B cell (primary cell): ENCODE measurements at regions of chr1 and their contacts with region 1.

Region 1: GRCh38 chr1:207963427-207964194 is 52.7 kb upstream of the CD34 start:
- DNase-seq: peak; percentile 87
- ATAC-seq: peak; percentile 94
- H3K4me3 ChIP-seq: peak overlapping the region; percentile 55 to 92 (median 88)
- H3K4me3 Mint-ChIP-seq: peak overlapping the region; percentile 92
- H3K27ac ChIP-seq: peak overlapping the region; percentile 27 to 62
- H3K27ac Mint-ChIP-seq: peak overlapping the region; percentile 70
- H3K4me1 ChIP-seq: peaks cover 21 to 25% of the 10 kb centered on the region in 2 donors
- H3K4me1 Mint-ChIP-seq: peaks cover 16% of the 10 kb centered on the region
- H3K27me3 ChIP-seq: peaks cover 0 to 29% (median 12%) of the 10 kb centered on the region in 4 experiments
- H3K27me3 Mint-ChIP-seq: peaks cover 20% of the 10 kb centered on the region
- CTCF ChIP-seq: peak; percentile 99

Region 2: DNA sequence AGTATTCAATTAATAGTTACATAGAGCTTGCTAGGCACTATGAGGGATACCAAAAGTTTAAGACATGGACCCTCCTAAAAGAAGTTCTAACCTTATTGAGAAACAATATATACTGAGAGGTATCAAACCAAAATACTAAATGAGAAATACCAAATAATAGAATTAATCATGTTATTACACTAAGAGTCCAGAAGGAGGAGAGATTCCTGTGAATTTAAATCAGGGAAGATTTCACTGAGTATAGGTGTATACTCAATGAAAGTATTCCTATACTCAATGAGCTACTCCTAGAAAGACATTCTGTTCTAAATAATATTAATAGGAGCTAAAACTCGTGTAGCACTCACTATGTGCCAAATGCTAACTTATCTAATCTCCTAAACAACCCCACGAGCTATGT is 309.3 kb before region 1 on chr1:
- CTCF ChIA-PET with region 1: no interaction called
- POLR2A ChIA-PET with region 1: no interaction called
- intact Hi-C with region 1: loop called (anchors 10 kb)
- DNase-seq: no peak
- ATAC-seq: no peak
- H3K4me3 ChIP-seq: no peak overlapping the region
- H3K4me3 Mint-ChIP-seq: no peak overlapping the region
- H3K27ac ChIP-seq: no peak overlapping the region
- H3K27ac Mint-ChIP-seq: no peak overlapping the region
- H3K4me1 ChIP-seq: no peaks in the 10 kb centered on the region
- H3K4me1 Mint-ChIP-seq: no peaks in the 10 kb centered on the region
- H3K27me3 ChIP-seq: no peaks in the 10 kb centered on the region
- H3K27me3 Mint-ChIP-seq: no peaks in the 10 kb centered on the region
- CTCF ChIP-seq: no peak

Region 3: GRCh38 chr1:207719234-207719633 is 244.4 kb before region 1 on chr1:
- CTCF ChIA-PET with region 1: no interaction called
- POLR2A ChIA-PET with region 1: no interaction called
- intact Hi-C with region 1: no loop called
- DNase-seq: no peak
- ATAC-seq: no peak
- H3K4me3 ChIP-seq: no peak overlapping the region
- H3K4me3 Mint-ChIP-seq: no peak overlapping the region
- H3K27ac ChIP-seq: no peak overlapping the region
- H3K27ac Mint-ChIP-seq: no peak overlapping the region
- H3K4me1 ChIP-seq: no peaks in the 10 kb centered on the region
- H3K4me1 Mint-ChIP-seq: no peaks in the 10 kb centered on the region
- H3K27me3 ChIP-seq: no peaks in the 10 kb centered on the region
- H3K27me3 Mint-ChIP-seq: no peaks in the 10 kb centered on the region
- CTCF ChIP-seq: no peak

Region 4: GRCh38 chr1:207797229-207797961 is 166.2 kb before region 1 on chr1:
- CTCF ChIA-PET with region 1: interaction called, 30 read pairs
- POLR2A ChIA-PET with region 1: no interaction called
- intact Hi-C with region 1: loop called (anchors 1 kb)
- DNase-seq: peak; percentile 75
- ATAC-seq: peak; percentile 80
- H3K4me3 ChIP-seq: no peak overlapping the region
- H3K4me3 Mint-ChIP-seq: no peak overlapping the region
- H3K27ac ChIP-seq: no peak overlapping the region
- H3K27ac Mint-ChIP-seq: no peak overlapping the region
- H3K4me1 ChIP-seq: peaks cover 16 to 22% of the 10 kb centered on the region in 2 donors
- H3K4me1 Mint-ChIP-seq: peaks cover 33% of the 10 kb centered on the region
- H3K27me3 ChIP-seq: no peaks in the 10 kb centered on the region
- H3K27me3 Mint-ChIP-seq: no peaks in the 10 kb centered on the region
- CTCF ChIP-seq: peak; percentile 83

Region 5: GRCh38 chr1:207897188-207897587 is 66.4 kb before region 1 on chr1:
- CTCF ChIA-PET with region 1: interaction called, 37 read pairs
- POLR2A ChIA-PET with region 1: no interaction called
- intact Hi-C with region 1: loop called (anchors 1 kb)
- DNase-seq: no peak
- ATAC-seq: no peak
- H3K4me3 ChIP-seq: no peak overlapping the region
- H3K4me3 Mint-ChIP-seq: no peak overlapping the region
- H3K27ac ChIP-seq: no peak overlapping the region
- H3K27ac Mint-ChIP-seq: no peak overlapping the region
- H3K4me1 ChIP-seq: no peaks in the 10 kb centered on the region
- H3K4me1 Mint-ChIP-seq: peaks cover 7% of the 10 kb centered on the region
- H3K27me3 ChIP-seq: peaks cover 0 to 3% (median 0%) of the 10 kb centered on the region in 4 experiments
- H3K27me3 Mint-ChIP-seq: peaks cover 3% of the 10 kb centered on the region
- CTCF ChIP-seq: peak; percentile 45

Region 6: DNA sequence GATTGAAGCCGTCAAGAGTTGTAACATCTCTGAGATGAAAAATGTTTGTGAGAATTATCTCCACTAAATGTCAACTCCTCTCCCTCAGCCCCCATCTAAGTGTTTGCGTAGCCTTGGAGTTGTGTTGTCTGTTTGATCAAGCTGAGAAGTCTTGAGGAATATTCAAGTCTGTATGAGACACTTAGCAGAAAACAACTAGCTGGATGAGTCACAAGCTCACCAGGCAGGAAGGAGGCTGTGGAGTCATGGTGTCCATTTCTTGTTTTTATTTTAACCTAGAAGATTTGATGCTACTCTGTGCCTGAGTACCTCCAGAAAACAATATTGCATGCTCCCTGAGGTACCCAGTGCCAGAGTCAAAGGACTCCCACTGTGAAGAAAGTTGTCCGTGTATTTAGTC is 492.2 kb after region 1 on chr1:
- CTCF ChIA-PET with region 1: no interaction called
- POLR2A ChIA-PET with region 1: no interaction called
- intact Hi-C with region 1: no loop called
- DNase-seq: no peak
- ATAC-seq: no peak
- H3K4me3 ChIP-seq: no peak overlapping the region
- H3K4me3 Mint-ChIP-seq: no peak overlapping the region
- H3K27ac ChIP-seq: no peak overlapping the region
- H3K27ac Mint-ChIP-seq: no peak overlapping the region
- H3K4me1 ChIP-seq: no peaks in the 10 kb centered on the region
- H3K4me1 Mint-ChIP-seq: no peaks in the 10 kb centered on the region
- H3K27me3 ChIP-seq: no peaks in the 10 kb centered on the region
- H3K27me3 Mint-ChIP-seq: peaks cover 5% of the 10 kb centered on the region
- CTCF ChIP-seq: no peak